Activated CD4-positive, alpha-beta memory T cell treated with anti-CD3 and anti-CD28 coated beads for 36 hours (primary cell): ENCODE measurements at regions of chr7 and their contacts with region 1.

Region 1: GRCh38 chr7:63925623-63926460 is 72.8 kb upstream of the ZNF722 start:
- DNase-seq: peak; percentile 91
- H3K4me3 Mint-ChIP-seq: peak overlapping the region; percentile 89
- H3K27ac Mint-ChIP-seq: peak overlapping the region; percentile 93
- H3K4me1 Mint-ChIP-seq: peaks cover 6% of the 10 kb centered on the region
- H3K27me3 Mint-ChIP-seq: no peaks in the 10 kb centered on the region

Region 2: GRCh38 chr7:63900394-63901203 is 25.2 kb before region 1 on chr7:
- CTCF ChIA-PET with region 1: interaction called, 4 read pairs
- POLR2A ChIA-PET with region 1: interaction called, 7 read pairs
- intact Hi-C with region 1: loop called (anchors 1 kb)
- DNase-seq: peak; percentile 92
- H3K4me3 Mint-ChIP-seq: peak overlapping the region; percentile 89
- H3K27ac Mint-ChIP-seq: peak overlapping the region; percentile 83
- H3K4me1 Mint-ChIP-seq: peaks cover 3% of the 10 kb centered on the region
- H3K27me3 Mint-ChIP-seq: no peaks in the 10 kb centered on the region

Region 3: GRCh38 chr7:63953181-63953580 is 27.3 kb after region 1 on chr7:
- CTCF ChIA-PET with region 1: no interaction called
- POLR2A ChIA-PET with region 1: no interaction called
- intact Hi-C with region 1: no loop called
- DNase-seq: no peak
- H3K4me3 Mint-ChIP-seq: no peak overlapping the region
- H3K27ac Mint-ChIP-seq: no peak overlapping the region
- H3K4me1 Mint-ChIP-seq: no peaks in the 10 kb centered on the region
- H3K27me3 Mint-ChIP-seq: no peaks in the 10 kb centered on the region

Region 4: GRCh38 chr7:63968629-63969028 is 42.8 kb after region 1 on chr7:
- CTCF ChIA-PET with region 1: no interaction called
- POLR2A ChIA-PET with region 1: no interaction called
- intact Hi-C with region 1: no loop called
- DNase-seq: no peak
- H3K4me3 Mint-ChIP-seq: no peak overlapping the region
- H3K27ac Mint-ChIP-seq: no peak overlapping the region
- H3K4me1 Mint-ChIP-seq: no peaks in the 10 kb centered on the region
- H3K27me3 Mint-ChIP-seq: no peaks in the 10 kb centered on the region

Region 5: DNA sequence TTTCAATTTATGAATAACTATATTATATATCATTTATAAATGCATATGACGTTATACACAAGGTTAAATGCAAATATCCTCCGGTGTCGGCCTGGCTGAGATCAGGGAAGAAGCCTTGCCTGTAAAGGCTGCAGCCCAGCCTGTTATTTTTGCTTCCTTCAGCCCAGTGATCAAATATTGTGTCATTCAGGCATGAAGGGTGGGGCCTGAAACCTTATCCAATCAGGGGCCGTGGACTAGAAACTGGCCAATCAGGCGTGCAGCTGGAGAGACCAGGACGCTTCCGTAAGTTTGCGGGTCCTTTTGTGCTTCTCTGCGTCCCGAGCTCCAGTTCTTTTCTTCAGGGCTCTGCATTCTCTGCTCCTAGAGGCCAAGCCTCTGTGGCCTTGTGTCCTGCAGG is 72.7 kb after region 1 on chr7 and contains the start of gene ZNF722:
- CTCF ChIA-PET with region 1: no interaction called
- POLR2A ChIA-PET with region 1: no interaction called
- intact Hi-C with region 1: no loop called
- DNase-seq: no peak
- H3K4me3 Mint-ChIP-seq: no peak within 1 kb of the TSS
- H3K27ac Mint-ChIP-seq: no peak within 1 kb of the TSS
- H3K4me1 Mint-ChIP-seq: no peaks in the 10 kb centered on the region
- H3K27me3 Mint-ChIP-seq: no peaks in the 10 kb centered on the region
- total RNA-seq, gene ZNF722: not detected

Region 6: GRCh38 chr7:64625114-64626082 is 699.6 kb after region 1 on chr7:
- CTCF ChIA-PET with region 1: no interaction called
- POLR2A ChIA-PET with region 1: no interaction called
- intact Hi-C with region 1: loop called (anchors 1 kb)
- DNase-seq: no peak
- H3K4me3 Mint-ChIP-seq: no peak overlapping the region
- H3K27ac Mint-ChIP-seq: no peak overlapping the region
- H3K4me1 Mint-ChIP-seq: peaks cover 3% of the 10 kb centered on the region
- H3K27me3 Mint-ChIP-seq: no peaks in the 10 kb centered on the region

Region 7: DNA sequence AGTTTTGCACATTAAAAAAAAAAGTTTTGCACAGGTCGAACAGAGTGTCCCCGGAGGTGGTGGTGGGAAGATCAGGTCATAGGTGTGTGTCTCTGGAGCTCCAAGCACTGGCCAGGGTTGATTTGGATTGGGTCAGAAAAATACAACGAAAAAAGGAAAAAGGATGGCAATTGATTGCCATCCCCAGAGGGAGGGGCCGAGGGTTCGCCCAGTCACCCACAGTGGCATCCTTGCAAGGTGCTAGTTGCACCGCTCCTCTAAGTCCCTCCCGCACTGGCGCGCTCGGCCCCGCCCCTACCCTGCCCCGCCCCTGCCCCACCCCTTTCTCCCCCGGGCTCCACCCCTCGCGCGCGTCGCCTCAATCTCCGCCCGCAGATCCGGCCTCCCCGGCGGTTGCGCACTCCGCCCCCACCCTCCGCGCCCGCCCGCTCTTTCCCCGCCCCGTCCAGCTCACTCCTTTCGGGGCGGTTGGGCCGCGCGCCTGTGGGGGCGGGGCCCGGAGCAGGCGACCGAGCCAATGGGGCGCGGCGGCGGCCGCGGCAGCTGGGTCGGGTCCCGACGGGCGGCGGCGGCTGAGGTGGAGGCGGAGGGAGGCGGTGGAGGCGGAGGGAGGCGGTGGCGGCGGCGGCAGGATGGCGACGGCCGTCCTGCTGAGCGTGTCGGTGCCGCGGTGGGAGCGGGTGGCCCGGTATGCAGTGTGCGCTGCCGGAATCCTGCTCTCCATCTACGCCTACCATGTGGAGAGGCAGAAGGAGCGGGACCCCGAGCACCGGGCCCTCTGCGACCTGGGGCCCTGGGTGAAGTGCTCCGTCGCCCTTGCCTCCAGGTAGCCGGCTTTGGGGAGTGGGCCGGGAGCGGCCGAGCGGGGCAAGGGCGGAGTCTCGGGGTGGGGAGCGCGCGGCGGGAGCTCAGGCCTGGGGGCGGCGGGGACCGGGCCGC is 1112.2 kb after region 1 on chr7:
- CTCF ChIA-PET with region 1: no interaction called
- POLR2A ChIA-PET with region 1: no interaction called
- intact Hi-C with region 1: loop called (anchors 2 kb)
- DNase-seq: peak; percentile 96
- H3K4me3 Mint-ChIP-seq: peak overlapping the region; percentile 73
- H3K27ac Mint-ChIP-seq: no peak overlapping the region
- H3K4me1 Mint-ChIP-seq: peaks cover 13% of the 10 kb centered on the region
- H3K27me3 Mint-ChIP-seq: no peaks in the 10 kb centered on the region